B cell (primary cell): ENCODE measurements at regions of chr4 and their contacts with region 1.

Region 1: DNA sequence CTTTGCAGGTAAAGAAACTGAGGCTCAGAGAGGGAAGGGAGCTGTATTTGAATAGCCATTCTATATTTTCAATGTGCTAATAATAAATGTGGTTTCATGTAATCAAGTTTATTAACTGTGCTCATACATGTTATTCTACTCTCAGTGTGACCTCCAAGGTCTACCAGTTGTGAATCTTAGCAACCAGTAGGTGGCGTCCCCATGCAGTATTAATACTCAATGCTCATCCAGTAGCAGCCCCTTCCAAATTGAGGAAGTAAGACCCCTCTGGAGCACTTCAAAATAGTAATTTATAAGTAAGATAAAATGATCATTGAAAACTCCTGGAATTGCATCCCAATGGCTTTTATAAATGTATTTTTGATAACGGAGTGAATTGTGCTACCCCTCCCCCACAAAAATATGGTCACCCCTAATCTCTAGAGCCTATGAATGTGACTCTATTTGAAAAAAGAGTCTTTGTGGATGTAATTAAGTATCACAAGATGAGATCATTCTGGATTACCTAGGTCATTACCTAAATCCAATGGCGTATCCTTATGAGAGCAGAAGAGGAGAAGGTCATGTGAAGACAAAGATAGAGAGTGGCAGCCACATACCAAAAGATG is 20.4 kb upstream of the SEPSECS start:
- DNase-seq: peak; percentile 69
- ATAC-seq: peak; percentile 60
- H3K4me3 ChIP-seq: no peak overlapping the region
- H3K4me3 Mint-ChIP-seq: no peak overlapping the region
- H3K27ac ChIP-seq: no peak overlapping the region
- H3K27ac Mint-ChIP-seq: no peak overlapping the region
- H3K4me1 ChIP-seq: no peaks in the 10 kb centered on the region
- H3K4me1 Mint-ChIP-seq: no peaks in the 10 kb centered on the region
- H3K27me3 ChIP-seq: no peaks in the 10 kb centered on the region
- H3K27me3 Mint-ChIP-seq: no peaks in the 10 kb centered on the region
- CTCF ChIP-seq: peak; percentile 74

Region 2: GRCh38 chr4:25234390-25235370 is 54.1 kb after region 1 on chr4:
- CTCF ChIA-PET with region 1: interaction called, 3 read pairs
- POLR2A ChIA-PET with region 1: no interaction called
- intact Hi-C with region 1: loop called (anchors 5 kb)
- DNase-seq: peak; percentile 85
- ATAC-seq: peak; percentile 50
- H3K4me3 ChIP-seq: peak overlapping the region; percentile 72 to 91 (median 79)
- H3K4me3 Mint-ChIP-seq: peak overlapping the region; percentile 85
- H3K27ac ChIP-seq: peak overlapping the region; percentile 84 to 85
- H3K27ac Mint-ChIP-seq: peak overlapping the region; percentile 82
- H3K4me1 ChIP-seq: peaks cover 25 to 29% of the 10 kb centered on the region in 2 donors
- H3K4me1 Mint-ChIP-seq: peaks cover 39% of the 10 kb centered on the region
- H3K27me3 ChIP-seq: no peaks in the 10 kb centered on the region
- H3K27me3 Mint-ChIP-seq: no peaks in the 10 kb centered on the region
- CTCF ChIP-seq: peak; percentile 59

Region 3: DNA sequence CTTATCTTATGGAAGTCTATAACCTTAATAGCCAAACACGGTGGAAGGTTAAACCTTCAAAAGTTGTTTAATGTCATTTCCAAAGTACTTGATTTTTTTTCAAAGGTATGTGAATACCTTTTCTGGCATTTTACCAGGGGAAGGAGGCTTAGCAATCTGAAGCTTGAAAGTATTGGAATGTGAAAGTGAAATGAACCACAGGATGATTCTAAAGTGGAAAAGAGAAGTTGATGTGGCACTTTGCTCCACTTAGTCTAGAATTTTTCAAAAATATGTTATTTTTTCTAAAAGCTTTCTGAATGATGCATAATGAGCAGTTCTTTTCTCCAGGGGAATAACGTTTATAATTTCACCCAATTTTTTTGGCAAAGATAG is 72.4 kb after region 1 on chr4:
- CTCF ChIA-PET with region 1: no interaction called
- POLR2A ChIA-PET with region 1: no interaction called
- intact Hi-C with region 1: no loop called
- DNase-seq: peak; percentile 17
- ATAC-seq: no peak
- H3K4me3 ChIP-seq: no peak overlapping the region
- H3K4me3 Mint-ChIP-seq: no peak overlapping the region
- H3K27ac ChIP-seq: peak overlapping the region in 1 of 2 donors; percentile 15
- H3K27ac Mint-ChIP-seq: no peak overlapping the region
- H3K4me1 ChIP-seq: peaks cover 5 to 8% of the 10 kb centered on the region in 2 donors
- H3K4me1 Mint-ChIP-seq: peaks cover 36% of the 10 kb centered on the region
- H3K27me3 ChIP-seq: no peaks in the 10 kb centered on the region
- H3K27me3 Mint-ChIP-seq: no peaks in the 10 kb centered on the region
- CTCF ChIP-seq: no peak

Region 4: GRCh38 chr4:25367004-25367621 is 186.5 kb after region 1 on chr4:
- CTCF ChIA-PET with region 1: interaction called, 29 read pairs
- POLR2A ChIA-PET with region 1: no interaction called
- intact Hi-C with region 1: no loop called
- DNase-seq: peak; percentile 51
- ATAC-seq: no peak
- H3K4me3 ChIP-seq: no peak overlapping the region
- H3K4me3 Mint-ChIP-seq: no peak overlapping the region
- H3K27ac ChIP-seq: no peak overlapping the region
- H3K27ac Mint-ChIP-seq: no peak overlapping the region
- H3K4me1 ChIP-seq: no peaks in the 10 kb centered on the region
- H3K4me1 Mint-ChIP-seq: no peaks in the 10 kb centered on the region
- H3K27me3 ChIP-seq: no peaks in the 10 kb centered on the region
- H3K27me3 Mint-ChIP-seq: no peaks in the 10 kb centered on the region
- CTCF ChIP-seq: peak; percentile 78